ENCODE measurements at regions of chr19 and their contacts with region 1.

Region 1: DNA sequence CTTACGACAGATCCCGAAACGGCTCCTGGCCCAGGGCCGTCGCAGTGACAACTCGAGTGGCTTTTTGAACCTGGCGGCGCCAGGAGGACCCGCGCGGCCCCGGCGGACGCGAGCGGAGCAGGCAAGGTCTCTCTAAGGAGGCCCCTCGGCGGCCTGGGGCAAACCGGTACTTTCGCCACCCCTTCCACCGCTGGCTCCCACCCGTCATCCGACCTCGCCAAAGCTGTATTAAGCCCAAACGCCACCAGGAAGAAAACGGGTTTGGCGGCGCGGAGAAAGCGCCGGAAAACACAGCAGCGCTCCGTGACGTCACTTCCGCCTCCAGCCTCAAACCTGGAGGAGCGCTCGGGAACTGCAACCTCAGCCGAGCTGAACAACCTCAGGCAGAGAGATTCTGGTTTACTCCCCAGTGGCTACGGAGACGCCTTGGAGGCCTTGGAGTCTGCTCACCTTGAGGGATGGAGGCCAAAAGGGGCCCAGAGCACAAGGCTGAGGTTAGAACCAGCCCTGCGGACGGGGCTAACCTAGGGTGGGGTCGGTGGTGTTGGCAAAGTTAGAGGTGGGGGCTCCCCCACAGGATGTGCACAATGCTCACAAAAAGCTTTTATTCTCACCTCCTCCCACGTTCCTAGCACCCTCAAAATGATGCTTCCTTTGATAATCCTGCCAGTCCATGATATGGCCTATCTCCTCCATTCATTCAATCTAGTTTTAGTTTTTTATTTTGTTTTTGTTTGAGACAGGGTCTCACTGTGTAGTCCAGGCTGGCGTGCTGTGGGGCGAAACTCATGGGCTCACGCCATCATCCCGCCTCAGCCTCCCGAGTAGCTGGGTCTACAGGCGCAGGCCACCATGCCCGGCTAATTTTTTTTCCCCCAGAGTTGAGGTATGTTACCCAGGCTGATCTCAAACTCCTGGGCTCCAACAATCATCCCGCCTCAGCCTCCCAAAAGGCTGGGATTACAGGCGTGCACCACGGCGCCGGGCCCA is at the start of gene ZNF266:
- DNase-seq: peak; percentile 96
- H3K4me3 Mint-ChIP-seq: peak within 1 kb of the TSS; percentile 90
- H3K27ac Mint-ChIP-seq: peak within 1 kb of the TSS; percentile 99
- H3K4me1 Mint-ChIP-seq: peaks cover 20% of the 10 kb centered on the region
- H3K27me3 Mint-ChIP-seq: no peaks in the 10 kb centered on the region
- total RNA-seq, gene ZNF266: 19.7 to 21.9 TPM

Region 2: GRCh38 chr19:9309139-9309973 is 126.2 kb before region 1 on chr19 and contains the start of gene ZNF699:
- CTCF ChIA-PET with region 1: interaction called, 3 read pairs
- intact Hi-C with region 1: loop called (anchors 5 kb)
- DNase-seq: peak; percentile 99
- H3K4me3 Mint-ChIP-seq: peak within 1 kb of the TSS; percentile 86
- H3K27ac Mint-ChIP-seq: peak within 1 kb of the TSS; percentile 97
- H3K4me1 Mint-ChIP-seq: peaks cover 12% of the 10 kb centered on the region
- H3K27me3 Mint-ChIP-seq: peaks cover 2% of the 10 kb centered on the region
- total RNA-seq, gene ZNF699: 4.6 to 6.4 TPM

Region 3: GRCh38 chr19:9538183-9539058 is 102.8 kb after region 1 on chr19 and contains the start of gene ZNF426:
- CTCF ChIA-PET with region 1: no interaction called
- intact Hi-C with region 1: loop called (anchors 1 kb)
- DNase-seq: peak; percentile 95
- H3K4me3 Mint-ChIP-seq: peak within 1 kb of the TSS; percentile 98
- H3K27ac Mint-ChIP-seq: peak within 1 kb of the TSS; percentile 96
- H3K4me1 Mint-ChIP-seq: peaks cover 22% of the 10 kb centered on the region
- H3K27me3 Mint-ChIP-seq: no peaks in the 10 kb centered on the region
- total RNA-seq, gene ZNF426: 11.2 to 12.3 TPM